AG04450 (cell line): ENCODE measurements at regions of chr7 and their contacts with region 1.

Region 1: DNA sequence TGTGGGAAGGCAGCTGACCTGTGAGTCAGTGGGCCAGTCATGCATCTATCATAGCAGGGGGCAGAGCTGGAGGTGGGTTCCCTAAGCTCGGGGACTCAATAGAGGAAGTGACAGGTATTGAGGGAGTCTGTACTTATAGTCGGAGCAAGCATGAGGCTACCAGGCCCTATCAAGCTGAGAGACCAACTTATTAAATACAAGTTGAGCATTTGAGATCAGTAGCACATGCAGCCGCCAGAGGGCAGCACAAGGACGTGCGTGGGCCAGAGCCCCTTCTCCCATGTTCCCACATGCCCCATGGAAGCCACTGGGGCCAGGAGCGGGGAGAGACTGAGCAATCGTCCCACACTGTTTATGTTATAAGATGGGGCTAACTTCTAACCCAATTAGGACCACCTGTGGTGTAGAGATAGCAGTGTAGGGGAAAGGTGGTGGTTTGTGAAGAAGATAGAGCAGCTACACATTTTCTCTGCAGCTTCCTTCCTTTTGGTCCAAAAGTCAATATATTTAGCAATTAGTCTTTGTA is 13.0 kb upstream of the STK31 start:
- DNase-seq: no peak
- H3K4me3 ChIP-seq: no peak overlapping the region
- H3K27ac ChIP-seq: no peak overlapping the region
- H3K27me3 ChIP-seq: no peaks in the 10 kb centered on the region
- CTCF ChIP-seq: peak; percentile 63

Region 2: GRCh38 chr7:23216021-23216420 is 481.0 kb before region 1 on chr7:
- CTCF ChIA-PET with region 1: no interaction called
- POLR2A ChIA-PET with region 1: no interaction called
- DNase-seq: no peak
- H3K4me3 ChIP-seq: no peak overlapping the region
- H3K27ac ChIP-seq: no peak overlapping the region
- H3K27me3 ChIP-seq: peaks cover 11% of the 10 kb centered on the region
- CTCF ChIP-seq: no peak

Region 3: GRCh38 chr7:23570592-23571200 is 126.3 kb before region 1 on chr7:
- CTCF ChIA-PET with region 1: interaction called, 10 read pairs
- POLR2A ChIA-PET with region 1: no interaction called
- DNase-seq: peak; percentile 44
- H3K4me3 ChIP-seq: no peak overlapping the region
- H3K27ac ChIP-seq: no peak overlapping the region
- H3K27me3 ChIP-seq: no peaks in the 10 kb centered on the region
- CTCF ChIP-seq: peak; percentile 95

Region 4: DNA sequence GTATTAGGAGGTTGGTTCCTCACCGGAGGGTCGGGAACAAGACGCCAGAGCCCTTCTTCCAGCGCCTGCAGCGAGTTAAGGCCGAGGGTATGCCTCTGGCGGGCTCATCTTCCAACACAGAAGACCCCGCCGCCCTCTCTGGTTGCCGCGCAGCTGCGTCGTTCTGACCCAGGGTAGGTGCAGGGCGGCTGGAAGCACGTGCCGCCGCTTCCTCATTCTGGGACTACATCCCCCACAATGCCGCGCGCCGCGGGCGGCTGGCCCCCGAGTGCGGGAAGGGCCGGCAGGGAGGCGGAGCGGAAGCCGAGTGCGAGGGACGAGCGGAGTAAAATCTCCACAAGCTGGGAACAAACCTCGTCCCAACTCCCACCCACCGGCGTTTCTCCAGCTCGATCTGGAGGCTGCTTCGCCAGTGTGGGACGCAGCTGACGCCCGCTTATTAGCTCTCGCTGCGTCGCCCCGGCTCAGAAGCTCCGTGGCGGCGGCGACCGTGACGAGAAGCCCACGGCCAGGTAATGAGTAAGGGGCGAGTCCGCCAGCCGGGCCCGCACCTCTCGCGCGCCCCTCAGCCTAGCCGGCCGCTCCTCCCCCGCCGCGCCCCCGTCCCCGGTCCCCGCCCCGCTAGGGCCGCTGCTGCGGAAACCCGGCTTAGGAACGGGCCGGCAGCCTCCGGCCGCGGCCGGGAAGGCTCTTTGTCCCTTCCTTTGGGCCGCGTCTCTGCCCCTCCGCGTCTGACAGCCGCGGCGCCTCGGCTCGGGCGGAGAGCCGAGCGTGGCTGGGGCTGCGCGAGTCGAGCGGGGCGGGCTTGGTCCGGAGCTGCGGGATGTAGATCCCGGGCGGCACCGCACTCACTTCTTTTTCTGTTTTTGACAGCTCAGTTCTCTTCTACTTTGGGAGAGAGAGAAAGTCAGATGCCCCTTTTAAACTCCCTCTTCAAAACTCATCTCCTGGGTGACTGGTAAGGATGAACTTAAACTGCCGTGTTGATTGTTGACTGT is 99.6 kb before region 1 on chr7 and contains the start of gene CCDC126:
- CTCF ChIA-PET with region 1: interaction called, 11 read pairs
- POLR2A ChIA-PET with region 1: no interaction called
- DNase-seq: peak; percentile 72
- H3K4me3 ChIP-seq: peak within 1 kb of the TSS; percentile 80
- H3K27ac ChIP-seq: peak within 1 kb of the TSS; percentile 80
- H3K27me3 ChIP-seq: no peaks in the 10 kb centered on the region
- CTCF ChIP-seq: no peak
- polyA plus RNA-seq, gene CCDC126: 5.7 and 7.6 TPM in 2 replicates

Region 5: DNA sequence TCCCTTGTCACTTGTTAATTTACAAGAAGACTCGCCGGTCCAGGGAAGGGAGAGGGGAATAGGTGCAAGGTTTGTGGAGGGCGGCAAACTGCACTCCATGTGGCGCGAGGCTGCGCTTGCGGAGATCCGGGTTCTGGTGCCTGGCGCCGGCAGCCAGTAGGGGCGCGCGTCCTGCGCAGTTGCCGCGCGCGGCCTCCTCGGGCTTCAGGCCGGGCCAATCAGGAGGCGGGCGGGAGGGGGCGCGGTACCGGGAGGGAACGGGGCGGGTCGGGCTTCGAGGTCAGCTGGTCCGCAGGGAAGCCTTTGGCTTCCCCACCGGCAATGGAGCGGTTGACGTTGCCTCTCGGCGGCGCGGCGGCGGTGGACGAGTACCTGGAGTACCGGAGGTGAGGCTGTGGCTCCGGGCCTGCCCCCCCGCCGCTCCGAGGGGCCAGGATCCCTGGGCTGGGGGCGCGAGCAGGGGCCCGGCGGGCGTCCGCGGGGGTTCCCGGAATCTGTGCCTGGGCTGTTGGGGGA is 17.0 kb before region 1 on chr7 and contains the start of gene FAM221A:
- CTCF ChIA-PET with region 1: interaction called, 28 read pairs
- POLR2A ChIA-PET with region 1: no interaction called
- DNase-seq: peak; percentile 47
- H3K4me3 ChIP-seq: peak within 1 kb of the TSS; percentile 68
- H3K27ac ChIP-seq: peak within 1 kb of the TSS; percentile 31
- H3K27me3 ChIP-seq: no peaks in the 10 kb centered on the region
- CTCF ChIP-seq: peak; percentile 70
- polyA plus RNA-seq, gene FAM221A: 3.1 and 3.5 TPM in 2 replicates

Region 6: DNA sequence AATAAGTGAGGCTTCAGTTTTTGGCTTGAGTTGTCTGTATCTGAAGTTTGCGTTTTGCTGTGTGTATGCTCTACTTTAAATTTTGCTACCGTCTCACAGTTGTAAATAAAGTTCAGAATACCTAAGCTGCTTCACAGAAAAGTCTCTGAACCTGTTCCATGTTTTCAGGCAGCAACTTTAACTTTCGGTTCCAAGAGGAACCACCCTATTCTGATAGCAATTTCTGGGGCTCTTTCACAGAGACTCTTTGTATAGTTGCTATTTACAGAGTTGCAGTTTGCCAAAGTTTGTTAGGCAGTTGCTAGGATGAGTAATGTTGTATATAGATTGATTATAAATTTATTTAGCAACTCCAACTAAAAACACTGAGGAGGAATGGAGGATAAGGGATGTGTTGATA is 11.2 kb before region 1 on chr7:
- CTCF ChIA-PET with region 1: interaction called, 28 read pairs
- POLR2A ChIA-PET with region 1: no interaction called
- DNase-seq: no peak
- H3K4me3 ChIP-seq: no peak overlapping the region
- H3K27ac ChIP-seq: no peak overlapping the region
- H3K27me3 ChIP-seq: no peaks in the 10 kb centered on the region
- CTCF ChIP-seq: no peak

Region 7: DNA sequence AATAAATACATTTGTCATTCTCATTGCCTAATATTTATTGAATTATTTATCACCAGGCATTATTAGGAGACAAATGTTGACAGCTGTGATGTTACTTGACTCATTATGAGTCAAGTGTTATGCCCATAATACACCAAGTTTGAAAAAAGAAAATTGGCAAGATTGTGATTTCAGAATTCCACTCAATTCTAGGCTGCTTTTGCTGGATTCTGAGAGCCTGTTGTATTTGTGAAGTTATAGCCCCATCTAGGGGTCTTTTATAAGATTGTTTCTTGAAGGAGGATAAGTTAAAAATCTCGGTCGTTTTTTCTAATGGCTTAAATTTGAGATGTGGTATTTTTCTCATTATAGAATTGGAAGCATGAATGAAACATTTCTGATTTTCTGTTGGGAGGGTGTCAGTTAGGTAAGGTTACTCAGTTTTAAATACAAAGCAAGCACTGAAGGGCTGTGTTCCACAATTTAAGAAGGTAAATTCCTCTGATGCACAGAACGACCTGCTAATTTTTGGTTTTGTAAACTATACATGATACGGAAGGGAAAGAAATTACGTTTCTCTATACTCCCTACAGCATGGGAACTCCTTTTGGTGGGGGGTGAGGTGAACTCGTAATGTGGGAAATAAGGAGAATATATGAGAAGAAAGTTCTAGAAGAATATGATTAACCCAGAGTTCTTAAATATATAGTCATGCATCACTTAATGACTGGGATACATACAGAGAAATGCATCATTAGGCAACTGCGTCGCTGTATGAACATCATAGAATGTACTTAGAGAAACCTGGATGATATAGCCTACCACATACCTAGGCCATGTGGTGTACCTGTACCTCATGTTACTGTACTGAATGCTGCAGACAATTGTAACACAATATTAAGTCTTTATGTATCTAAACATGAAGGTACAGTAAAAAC is 15.6 kb after region 1 on chr7:
- CTCF ChIA-PET with region 1: interaction called, 30 read pairs
- POLR2A ChIA-PET with region 1: no interaction called
- DNase-seq: peak; percentile 29
- H3K4me3 ChIP-seq: no peak overlapping the region
- H3K27ac ChIP-seq: no peak overlapping the region
- H3K27me3 ChIP-seq: no peaks in the 10 kb centered on the region
- CTCF ChIP-seq: peak; percentile 57

Region 8: DNA sequence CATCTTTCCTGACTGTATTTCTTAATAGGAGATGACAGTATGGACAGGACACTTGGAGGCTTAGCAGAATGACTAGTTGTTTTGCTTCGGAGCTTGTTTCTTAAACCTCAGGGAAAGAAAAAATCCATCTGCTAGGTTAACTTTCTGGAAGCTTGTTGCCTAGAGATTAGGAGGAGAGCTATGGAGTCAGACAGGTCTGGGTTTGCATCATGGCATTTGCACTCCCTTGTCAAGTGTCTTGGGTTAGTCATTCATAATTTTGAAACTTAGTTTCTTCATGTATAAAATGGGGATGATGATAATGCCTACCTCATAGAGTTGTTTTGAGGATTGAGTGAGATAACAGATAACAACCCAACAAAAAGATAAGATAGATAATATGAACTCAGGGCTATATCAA is 244.6 kb after region 1 on chr7:
- CTCF ChIA-PET with region 1: no interaction called
- POLR2A ChIA-PET with region 1: no interaction called
- DNase-seq: no peak
- H3K4me3 ChIP-seq: no peak overlapping the region
- H3K27ac ChIP-seq: no peak overlapping the region
- H3K27me3 ChIP-seq: no peaks in the 10 kb centered on the region
- CTCF ChIP-seq: no peak